Common myeloid progenitor, CD34-positive (primary cell): ENCODE measurements at regions of chr12 and their contacts with region 1.

Region 1: GRCh38 chr12:54279866-54280467 is at the start of gene CBX5:
- DNase-seq: peak; percentile 98 to 99 (median 99)
- H3K4me3 ChIP-seq: peak within 1 kb of the TSS; percentile 71 to 99 (median 96)
- H3K27ac ChIP-seq: peak within 1 kb of the TSS; percentile 99
- H3K4me1 ChIP-seq: peaks cover 39 to 70% (median 46%) of the 10 kb centered on the region in 4 experiments
- H3K27me3 ChIP-seq: no peaks in the 10 kb centered on the region

Region 2: DNA sequence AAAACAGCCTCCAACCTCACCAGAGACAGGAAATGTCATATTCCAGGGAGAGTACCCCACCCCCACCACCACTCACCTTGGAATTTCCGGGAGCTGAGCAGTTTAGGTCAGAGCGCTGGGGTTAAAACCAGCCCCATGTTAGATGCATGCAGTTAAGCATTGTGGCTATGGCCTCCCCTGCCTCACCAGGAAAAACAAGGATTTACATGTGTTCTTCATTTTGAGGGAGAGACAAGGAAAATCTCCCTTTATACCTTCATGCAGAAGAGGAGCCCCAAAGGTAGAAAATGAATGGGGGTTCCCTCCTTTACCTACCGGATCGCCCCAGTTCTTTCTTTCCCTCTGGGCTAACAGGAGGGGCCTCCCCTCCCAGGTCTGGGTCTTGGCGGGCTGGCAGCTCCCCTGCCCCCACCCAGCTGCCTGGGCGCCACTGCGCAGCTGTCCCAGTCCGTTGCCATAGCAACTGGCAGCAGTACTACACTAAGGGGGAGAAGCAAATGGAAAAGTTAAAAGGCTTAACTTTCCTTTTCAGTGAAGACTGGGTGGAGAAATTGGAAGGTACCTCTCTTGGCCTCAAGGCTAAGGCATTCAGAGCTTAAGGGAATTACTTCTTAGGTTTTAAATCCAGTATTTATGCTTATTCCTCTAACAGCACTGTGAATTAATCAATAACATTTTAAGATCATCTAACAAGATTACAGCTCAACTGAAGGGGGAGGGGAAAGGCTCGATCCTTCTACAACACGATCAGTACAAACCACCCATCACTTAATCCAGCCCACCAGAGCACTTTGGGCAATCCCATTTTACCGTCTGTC is 20.6 kb before region 1 on chr12:
- CTCF ChIA-PET with region 1: interaction called, 5 read pairs
- POLR2A ChIA-PET with region 1: interaction called, 18 read pairs
- DNase-seq: peak; percentile 81 to 88 (median 86)
- H3K4me3 ChIP-seq: peak overlapping the region in 6 of 7 experiments; percentile 46 to 80 (median 66)
- H3K27ac ChIP-seq: peak overlapping the region; percentile 83 to 90
- H3K4me1 ChIP-seq: peaks cover 27 to 55% (median 45%) of the 10 kb centered on the region in 4 experiments
- H3K27me3 ChIP-seq: no peaks in the 10 kb centered on the region

Region 3: DNA sequence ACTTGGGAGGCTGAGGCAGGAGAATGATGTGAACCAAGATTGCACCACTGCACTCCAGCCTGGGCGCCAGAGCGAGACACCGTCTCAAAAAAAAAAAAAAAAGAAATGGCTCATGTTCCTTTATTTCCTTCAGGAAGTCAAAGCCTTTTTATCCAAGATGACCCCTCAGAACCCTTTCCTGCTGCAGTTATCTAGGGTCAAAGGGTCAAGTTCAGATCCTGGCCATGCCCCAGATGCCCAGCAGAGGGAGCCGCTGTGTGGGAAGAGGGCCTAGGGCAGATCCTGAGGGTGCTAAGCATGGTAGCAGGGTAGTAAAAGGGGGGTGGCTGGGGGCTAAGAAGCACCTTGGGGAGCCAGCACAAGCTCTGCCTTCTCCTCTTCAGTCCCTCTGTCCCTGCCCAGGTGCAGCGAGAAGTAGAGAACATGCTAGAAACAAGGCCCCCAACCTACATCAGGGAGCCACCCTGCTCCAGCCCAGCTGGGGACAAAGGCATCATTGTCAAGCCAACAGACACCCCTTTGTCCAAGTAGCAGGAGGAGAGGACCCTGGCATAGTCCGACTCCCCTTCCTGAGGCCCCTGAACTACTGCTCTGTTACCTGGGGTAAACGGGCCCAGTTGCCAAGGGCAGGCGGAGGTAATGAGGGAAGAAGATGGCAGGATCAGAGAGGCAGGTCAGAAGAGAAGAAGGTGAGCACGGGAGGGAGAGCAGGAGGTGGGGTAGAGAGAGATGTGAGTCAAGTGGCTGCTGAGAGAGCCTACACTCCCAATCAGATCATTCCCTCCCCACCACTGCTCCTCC is 14.4 kb after region 1 on chr12:
- CTCF ChIA-PET with region 1: interaction called, 25 read pairs
- POLR2A ChIA-PET with region 1: interaction called, 5 read pairs
- DNase-seq: peak; percentile 64 to 76 (median 73)
- H3K4me3 ChIP-seq: peak overlapping the region in 5 of 7 experiments; percentile 40 to 86 (median 59)
- H3K27ac ChIP-seq: peak overlapping the region; percentile 22 to 95
- H3K4me1 ChIP-seq: peaks cover 24 to 93% (median 86%) of the 10 kb centered on the region in 4 experiments
- H3K27me3 ChIP-seq: no peaks in the 10 kb centered on the region

Region 4: GRCh38 chr12:54359033-54359761 is 79.2 kb after region 1 on chr12:
- CTCF ChIA-PET with region 1: no interaction called
- POLR2A ChIA-PET with region 1: interaction called, 14 read pairs
- DNase-seq: peak; percentile 99
- H3K4me3 ChIP-seq: peak overlapping the region; percentile 56 to 78 (median 74)
- H3K27ac ChIP-seq: peak overlapping the region; percentile 51 to 90
- H3K4me1 ChIP-seq: peaks cover 13 to 62% (median 53%) of the 10 kb centered on the region in 4 experiments
- H3K27me3 ChIP-seq: no peaks in the 10 kb centered on the region

Region 5: GRCh38 chr12:54385241-54385914 is 105.4 kb after region 1 on chr12:
- CTCF ChIA-PET with region 1: no interaction called
- POLR2A ChIA-PET with region 1: no interaction called
- DNase-seq: no peak
- H3K4me3 ChIP-seq: peak overlapping the region in 1 of 7 experiments; percentile 39
- H3K27ac ChIP-seq: no peak overlapping the region
- H3K4me1 ChIP-seq: peaks cover 0 to 75% (median 40%) of the 10 kb centered on the region in 4 experiments
- H3K27me3 ChIP-seq: no peaks in the 10 kb centered on the region